Right ventricle myocardium inferior (tissue), 1 donor: ENCODE measurements at regions of chr9 and their contacts with region 1.

Region 1: GRCh38 chr9:69502671-69503301 is 169.4 kb downstream of the APBA1 start:
- DNase-seq: no peak
- ATAC-seq: no peak

Region 2: DNA sequence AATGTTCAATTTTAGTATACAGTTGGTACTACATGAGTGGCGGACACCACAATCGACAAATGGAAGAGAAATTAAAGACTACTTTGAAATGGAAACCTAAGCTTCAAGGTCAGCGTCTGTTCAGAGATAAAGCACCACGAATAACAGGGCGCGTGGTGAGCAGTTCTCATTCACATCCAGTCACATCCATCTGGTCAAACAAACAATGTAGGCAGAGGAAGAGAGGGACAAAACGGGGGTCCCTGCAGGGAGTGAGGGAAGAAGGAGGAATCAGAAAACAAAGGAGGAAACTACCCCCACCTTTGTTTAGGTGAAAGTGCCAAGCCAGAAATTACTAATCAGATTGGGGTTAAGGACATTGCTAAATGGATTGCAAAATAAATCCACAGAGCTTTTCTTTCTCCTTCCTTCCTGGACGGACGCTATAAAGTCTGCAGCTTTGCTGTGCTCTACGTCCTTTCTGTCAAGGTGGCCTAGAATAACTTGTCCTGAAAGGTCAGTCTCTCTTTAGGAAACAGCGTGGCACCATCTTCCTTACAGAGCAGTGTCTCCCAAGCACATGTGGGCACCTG is 39.2 kb before region 1 on chr9:
- intact Hi-C with region 1: loop called (anchors 5 kb)
- DNase-seq: no peak
- ATAC-seq: no peak